ENCODE measurements at regions of chr2 and their contacts with region 1.

Region 1: GRCh38 chr2:226560325-226560724 is 239.3 kb downstream of the IRS1 start:
- DNase-seq: no peak
- H3K4me3 ChIP-seq: no peak overlapping the region
- H3K27ac ChIP-seq: no peak overlapping the region
- H3K27me3 ChIP-seq: no peaks in the 10 kb centered on the region
- CTCF ChIP-seq: no peak

Region 2: DNA sequence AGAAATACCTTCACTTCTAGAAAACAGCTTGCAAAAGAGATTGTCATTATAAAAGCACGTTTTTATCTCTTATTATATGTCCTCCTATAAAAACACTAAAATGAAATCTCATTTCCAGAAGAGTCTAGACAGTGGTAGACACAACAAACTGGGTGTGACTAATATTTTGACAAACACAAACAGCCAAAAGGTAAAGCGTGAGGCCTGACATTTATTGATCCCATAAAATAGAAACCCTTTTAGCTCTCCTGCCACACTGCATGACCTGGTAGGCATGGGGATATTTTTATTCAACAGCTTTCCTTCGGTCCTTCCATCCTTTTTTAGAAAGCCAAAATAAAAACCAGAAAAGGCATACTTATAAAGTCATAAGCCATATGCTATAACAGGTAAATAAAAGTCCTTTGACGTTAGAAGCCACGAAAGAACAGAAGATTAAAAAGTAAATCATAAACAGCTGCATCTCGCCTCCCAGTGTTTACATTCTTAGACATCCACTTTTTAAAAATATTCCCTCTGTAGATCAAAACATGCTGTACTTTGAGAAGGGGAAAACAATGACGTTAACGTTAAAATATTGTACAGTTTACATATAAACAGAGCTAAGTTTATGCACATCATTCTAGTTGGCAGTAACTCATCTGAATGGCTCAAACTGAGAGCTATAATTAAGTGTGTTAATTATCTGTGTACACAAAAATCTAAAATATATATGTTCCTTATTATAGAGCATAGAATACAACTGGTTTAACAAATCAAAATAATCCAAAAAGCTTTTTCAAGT is 194.7 kb after region 1 on chr2:
- CTCF ChIA-PET with region 1: interaction called, 10 read pairs
- POLR2A ChIA-PET with region 1: no interaction called
- DNase-seq: peak; percentile 78
- H3K4me3 ChIP-seq: peak overlapping the region; percentile 23; the same call in 1 of the 2 replicates
- H3K27ac ChIP-seq: peak overlapping the region; percentile 95
- H3K27me3 ChIP-seq: no peaks in the 10 kb centered on the region
- CTCF ChIP-seq: no peak